ENCODE measurements at regions of chr18 and their contacts with region 1.

Region 1: GRCh38 chr18:65725251-65726050 is 25.4 kb upstream of the CDH7 start:
- DNase-seq: peak; percentile 73
- ATAC-seq: peak; percentile 87
- H3K4me3 ChIP-seq: peak overlapping the region; percentile 16; the same call in 1 of the 2 replicates
- H3K27ac ChIP-seq: no peak overlapping the region
- H3K4me1 ChIP-seq: no peaks in the 10 kb centered on the region
- H3K27me3 ChIP-seq: no peaks in the 10 kb centered on the region
- CTCF ChIP-seq: peak; percentile 80

Region 2: DNA sequence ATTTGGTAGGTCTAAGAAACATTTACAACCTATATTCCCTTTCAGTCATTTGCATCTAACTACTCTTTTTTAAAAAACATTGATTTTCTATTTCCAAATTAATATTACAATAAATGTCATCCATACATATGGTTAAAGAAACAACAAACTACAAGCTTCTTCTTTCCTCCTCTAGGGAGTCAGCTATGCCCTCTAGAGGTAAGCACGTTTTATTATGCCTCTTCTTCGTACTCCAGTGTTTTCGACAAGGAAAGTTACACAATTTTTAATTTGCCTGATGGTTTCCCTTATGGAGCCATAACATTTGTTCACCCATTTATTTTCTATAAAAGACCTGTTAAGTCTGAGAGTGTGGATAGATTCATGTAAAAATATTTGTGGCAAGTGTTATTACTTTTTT is 158.1 kb before region 1 on chr18:
- CTCF ChIA-PET with region 1: interaction called, 11 read pairs
- POLR2A ChIA-PET with region 1: no interaction called
- intact Hi-C with region 1: loop called (anchors 10 kb)
- DNase-seq: peak; percentile 64
- ATAC-seq: peak; percentile 68
- H3K4me3 ChIP-seq: no peak overlapping the region
- H3K27ac ChIP-seq: no peak overlapping the region
- H3K4me1 ChIP-seq: peaks cover 10% of the 10 kb centered on the region
- H3K27me3 ChIP-seq: no peaks in the 10 kb centered on the region
- CTCF ChIP-seq: peak; percentile 79

Region 3: GRCh38 chr18:65788373-65788772 is 62.9 kb after region 1 on chr18:
- CTCF ChIA-PET with region 1: interaction called, 7 read pairs
- POLR2A ChIA-PET with region 1: no interaction called
- intact Hi-C with region 1: loop called (anchors 1 kb)
- DNase-seq: peak; percentile 63
- ATAC-seq: peak; percentile 94
- H3K4me3 ChIP-seq: no peak overlapping the region
- H3K27ac ChIP-seq: no peak overlapping the region
- H3K4me1 ChIP-seq: no peaks in the 10 kb centered on the region; the same call in 1 of the 2 replicates
- H3K27me3 ChIP-seq: no peaks in the 10 kb centered on the region
- CTCF ChIP-seq: peak; percentile 71

Measured in PC-3 (cell line).